ENCODE measurements at regions of chr12 and their contacts with region 1.

Region 1: GRCh38 chr12:12008931-12009611 is 61.7 kb upstream of the BCL2L14 start:
- DNase-seq: peak in 25 of 35 experiments; percentile 8 to 66 (median 29)
- ATAC-seq: peak; percentile 61 to 82 (median 71)
- H3K4me3 ChIP-seq: no peak overlapping the region
- H3K4me3 Mint-ChIP-seq: peak overlapping the region; percentile 60 to 80 (median 73)
- H3K27ac ChIP-seq: peak overlapping the region; percentile 60
- H3K27ac Mint-ChIP-seq: peak overlapping the region; percentile 94 to 96
- H3K4me1 ChIP-seq: peaks cover 36 to 59% of the 10 kb centered on the region in 2 experiments
- H3K4me1 Mint-ChIP-seq: peaks cover 71 to 88% (median 81%) of the 10 kb centered on the region in 3 donors
- H3K27me3 ChIP-seq: no peaks in the 10 kb centered on the region
- H3K27me3 Mint-ChIP-seq: no peaks in the 10 kb centered on the region

Region 2: GRCh38 chr12:11981121-11981733 is 27.8 kb before region 1 on chr12:
- CTCF ChIA-PET with region 1: interaction called, 3 to 15 read pairs
- POLR2A ChIA-PET with region 1: interaction called, 3 read pairs
- DNase-seq: peak in 34 of 35 experiments; percentile 5 to 88 (median 28)
- ATAC-seq: peak; percentile 94 to 98 (median 96)
- H3K4me3 ChIP-seq: peak overlapping the region in 1 of 2 donors; percentile 16
- H3K4me3 Mint-ChIP-seq: peak overlapping the region; percentile 41 to 57 (median 44)
- H3K27ac ChIP-seq: peak overlapping the region; percentile 88
- H3K27ac Mint-ChIP-seq: peak overlapping the region; percentile 87 to 91
- H3K4me1 ChIP-seq: peaks cover 10 to 24% of the 10 kb centered on the region in 2 experiments
- H3K4me1 Mint-ChIP-seq: peaks cover 34 to 66% (median 51%) of the 10 kb centered on the region in 3 donors
- H3K27me3 ChIP-seq: no peaks in the 10 kb centered on the region
- H3K27me3 Mint-ChIP-seq: no peaks in the 10 kb centered on the region

Region 3: GRCh38 chr12:12224240-12224940 is 215.3 kb after region 1 on chr12:
- CTCF ChIA-PET with region 1: no interaction called
- POLR2A ChIA-PET with region 1: interaction called in 1 of 2 experiments, 11 read pairs
- DNase-seq: no peak
- ATAC-seq: no peak
- H3K4me3 ChIP-seq: no peak overlapping the region
- H3K4me3 Mint-ChIP-seq: no peak overlapping the region
- H3K27ac ChIP-seq: no peak overlapping the region
- H3K27ac Mint-ChIP-seq: no peak overlapping the region
- H3K4me1 ChIP-seq: no peaks in the 10 kb centered on the region
- H3K4me1 Mint-ChIP-seq: peaks cover 1 to 7% (median 3%) of the 10 kb centered on the region in 3 donors
- H3K27me3 ChIP-seq: peaks cover 0 to 8% of the 10 kb centered on the region in 2 experiments
- H3K27me3 Mint-ChIP-seq: peaks cover 0 to 8% of the 10 kb centered on the region in 2 donors

Region 4: DNA sequence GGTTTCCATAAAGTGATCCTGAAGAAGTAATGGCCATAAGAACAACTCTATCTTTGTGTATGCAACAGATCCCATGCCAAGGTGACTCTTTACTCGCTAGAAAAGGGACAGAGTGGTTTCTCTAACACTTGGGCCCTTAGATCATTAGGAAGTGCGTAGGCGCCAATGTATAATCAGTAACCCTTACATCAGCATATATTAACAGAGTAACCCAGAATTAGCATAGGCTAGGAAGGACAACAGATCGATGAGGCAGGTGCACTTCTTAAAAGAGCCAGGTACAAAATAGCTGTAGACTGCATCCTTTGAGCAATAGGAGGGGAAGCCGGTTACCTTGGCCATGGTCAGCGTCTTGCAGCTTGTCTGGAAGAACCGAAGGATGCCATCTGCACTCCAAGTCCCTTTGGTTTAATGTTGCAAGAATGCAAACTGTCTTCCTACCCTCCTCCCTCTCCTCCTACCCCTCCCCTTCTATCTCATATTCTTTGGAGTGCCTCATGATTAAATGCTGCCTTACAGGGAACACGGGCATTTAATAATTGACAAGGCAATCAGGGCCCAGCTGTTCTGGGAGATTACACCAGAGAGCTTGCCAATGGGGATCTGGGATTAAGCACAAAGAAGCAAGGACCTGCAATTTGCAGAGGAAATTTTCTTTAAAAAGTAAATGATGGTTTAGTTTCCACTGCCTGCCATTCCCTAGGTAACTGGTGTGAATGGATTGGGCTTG is 1086.4 kb after region 1 on chr12:
- CTCF ChIA-PET with region 1: no interaction called
- POLR2A ChIA-PET with region 1: interaction called in 1 of 2 experiments, 10 read pairs
- DNase-seq: no peak
- ATAC-seq: no peak
- H3K4me3 ChIP-seq: no peak overlapping the region
- H3K4me3 Mint-ChIP-seq: no peak overlapping the region
- H3K27ac ChIP-seq: no peak overlapping the region
- H3K27ac Mint-ChIP-seq: no peak overlapping the region
- H3K4me1 ChIP-seq: peaks cover 12 to 23% of the 10 kb centered on the region in 2 experiments
- H3K4me1 Mint-ChIP-seq: peaks cover 24 to 26% (median 26%) of the 10 kb centered on the region in 3 donors
- H3K27me3 ChIP-seq: peaks cover 0 to 4% of the 10 kb centered on the region in 2 experiments
- H3K27me3 Mint-ChIP-seq: no peaks in the 10 kb centered on the region

Measured in T-cell (primary cell).